Transverse colon (tissue), 4 donors: ENCODE measurements at regions of chr19 and their contacts with region 1.

Region 1: GRCh38 chr19:36819130-36819630 is 19.0 kb downstream of the ZNF790 start:
- DNase-seq: no peak
- H3K4me3 ChIP-seq: no peak overlapping the region
- H3K27ac ChIP-seq: no peak overlapping the region
- H3K4me1 ChIP-seq: no peaks in the 10 kb centered on the region
- H3K27me3 ChIP-seq: no peaks in the 10 kb centered on the region
- CTCF ChIP-seq: no peak
- EP300 ChIP-seq: no peak
- POLR2A ChIP-seq: no peak

Region 2: GRCh38 chr19:36772311-36773222 is 46.6 kb before region 1 on chr19 and contains the start of gene ZNF850:
- in situ Hi-C with region 1: no loop called
- intact Hi-C with region 1: no loop called
- DNase-seq: peak; percentile 95
- H3K4me3 ChIP-seq: peak within 1 kb of the TSS; percentile 48 to 81 (median 62)
- H3K27ac ChIP-seq: peak within 1 kb of the TSS; percentile 74 to 81 (median 78)
- H3K4me1 ChIP-seq: peaks cover 6 to 18% (median 9%) of the 10 kb centered on the region in 4 donors
- H3K27me3 ChIP-seq: no peaks in the 10 kb centered on the region
- CTCF ChIP-seq: no peak
- EP300 ChIP-seq: no peak
- POLR2A ChIP-seq: peak; percentile 42
- total RNA-seq, gene ZNF850: 0.75 to 2.2 (median 1.4) TPM

Region 3: DNA sequence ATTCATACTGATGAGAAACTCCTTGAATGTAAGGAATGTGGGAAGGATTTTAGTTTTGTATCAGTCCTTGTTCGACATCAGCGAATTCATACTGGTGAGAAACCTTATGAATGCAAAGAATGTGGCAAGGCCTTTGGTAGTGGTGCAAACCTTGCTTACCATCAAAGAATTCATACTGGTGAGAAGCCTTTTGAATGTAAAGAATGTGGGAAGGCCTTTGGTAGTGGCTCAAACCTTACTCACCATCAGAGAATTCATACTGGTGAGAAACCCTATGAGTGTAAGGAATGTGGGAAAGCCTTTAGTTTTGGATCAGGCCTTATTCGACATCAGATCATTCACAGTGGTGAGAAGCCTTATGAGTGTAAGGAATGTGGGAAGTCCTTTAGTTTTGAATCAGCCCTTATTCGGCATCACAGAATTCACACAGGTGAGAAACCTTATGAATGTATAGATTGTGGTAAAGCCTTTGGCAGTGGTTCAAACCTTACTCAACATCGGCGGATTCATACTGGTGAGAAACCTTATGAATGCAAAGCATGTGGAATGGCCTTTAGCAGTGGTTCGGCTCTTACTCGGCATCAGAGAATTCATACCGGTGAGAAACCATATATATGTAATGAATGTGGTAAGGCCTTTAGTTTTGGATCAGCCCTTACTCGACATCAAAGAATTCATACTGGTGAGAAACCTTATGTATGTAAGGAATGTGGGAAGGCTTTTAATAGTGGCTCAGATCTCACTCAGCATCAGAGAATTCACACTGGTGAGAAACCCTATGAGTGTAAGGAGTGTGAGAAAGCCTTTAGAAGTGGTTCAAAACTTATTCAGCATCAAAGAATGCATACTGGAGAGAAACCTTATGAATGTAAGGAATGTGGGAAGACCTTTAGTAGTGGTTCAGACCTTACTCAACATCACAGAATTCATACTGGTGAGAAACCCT is 58.1 kb after region 1 on chr19:
- in situ Hi-C with region 1: loop called in 1 of 4 experiments (anchors 10 kb)
- intact Hi-C with region 1: no loop called
- DNase-seq: no peak
- H3K4me3 ChIP-seq: no peak overlapping the region
- H3K27ac ChIP-seq: no peak overlapping the region
- H3K4me1 ChIP-seq: no peaks in the 10 kb centered on the region
- H3K27me3 ChIP-seq: no peaks in the 10 kb centered on the region
- CTCF ChIP-seq: no peak
- EP300 ChIP-seq: no peak
- POLR2A ChIP-seq: no peak

Region 4: GRCh38 chr19:37077934-37078725 is 258.9 kb after region 1 on chr19 and contains the start of gene ZNF420:
- in situ Hi-C with region 1: no loop called
- intact Hi-C with region 1: no loop called
- DNase-seq: peak; percentile 94
- H3K4me3 ChIP-seq: peak within 1 kb of the TSS; percentile 55 to 80 (median 76)
- H3K27ac ChIP-seq: peak within 1 kb of the TSS; percentile 78 to 89 (median 84)
- H3K4me1 ChIP-seq: peaks cover 8 to 10% (median 9%) of the 10 kb centered on the region in 4 donors
- H3K27me3 ChIP-seq: no peaks in the 10 kb centered on the region
- CTCF ChIP-seq: no peak
- EP300 ChIP-seq: no peak
- POLR2A ChIP-seq: peak; percentile 47
- total RNA-seq, gene ZNF420: 1.4 to 7.5 (median 4.9) TPM in 3 of 4 donors, not detected in the other

Region 5: GRCh38 chr19:37098548-37098947 is 279.4 kb after region 1 on chr19:
- in situ Hi-C with region 1: no loop called
- intact Hi-C with region 1: no loop called
- DNase-seq: no peak
- H3K4me3 ChIP-seq: no peak overlapping the region
- H3K27ac ChIP-seq: no peak overlapping the region
- H3K4me1 ChIP-seq: no peaks in the 10 kb centered on the region
- H3K27me3 ChIP-seq: no peaks in the 10 kb centered on the region
- CTCF ChIP-seq: no peak
- EP300 ChIP-seq: no peak
- POLR2A ChIP-seq: no peak

Region 6: GRCh38 chr19:37452500-37453245 is 633.5 kb after region 1 on chr19:
- in situ Hi-C with region 1: no loop called
- intact Hi-C with region 1: loop called (anchors 5 kb)
- DNase-seq: no peak
- H3K4me3 ChIP-seq: no peak overlapping the region
- H3K27ac ChIP-seq: no peak overlapping the region
- H3K4me1 ChIP-seq: no peaks in the 10 kb centered on the region
- H3K27me3 ChIP-seq: no peaks in the 10 kb centered on the region
- CTCF ChIP-seq: no peak
- EP300 ChIP-seq: no peak
- POLR2A ChIP-seq: no peak